AG04449 (cell line): ENCODE measurements at regions of chr1 and their contacts with region 1.

Region 1: DNA sequence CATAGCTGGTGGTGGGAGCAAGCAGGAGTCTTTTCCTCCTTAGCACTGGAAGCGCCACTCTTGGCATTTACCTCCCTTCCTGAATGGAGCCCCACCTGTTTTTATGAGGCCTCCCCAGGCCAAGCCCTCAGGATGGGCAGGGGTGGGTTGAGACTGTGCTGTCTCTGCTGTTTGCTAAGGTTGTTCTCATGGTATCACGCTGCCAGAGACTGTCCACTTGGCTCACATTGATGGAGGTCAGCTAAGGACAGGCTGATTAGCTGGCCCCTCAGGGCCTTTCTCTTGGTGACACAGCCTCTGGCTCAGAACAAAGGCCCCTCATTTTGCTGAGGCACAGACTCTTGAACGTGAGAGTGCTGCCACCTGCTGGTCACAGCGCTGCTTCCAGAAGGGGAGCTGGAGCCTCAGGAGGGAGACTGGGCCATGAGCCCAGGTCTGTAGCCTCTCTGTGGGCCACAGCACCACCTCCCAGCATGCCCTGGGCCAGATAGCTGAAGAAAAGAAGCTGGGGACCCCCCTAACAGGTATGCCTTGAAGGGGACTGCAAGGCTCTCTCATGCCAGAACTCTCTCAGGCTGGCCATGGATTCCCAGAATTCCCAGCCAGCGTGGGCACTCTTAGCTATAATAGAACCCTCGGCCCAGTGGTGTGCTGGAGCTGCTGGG is 85.6 kb downstream of the CD58 start:
- DNase-seq: no peak
- H3K4me3 ChIP-seq: no peak overlapping the region
- CTCF ChIP-seq: peak; percentile 92

Region 2: GRCh38 chr1:115949156-115949555 is 536.0 kb before region 1 on chr1:
- CTCF ChIA-PET with region 1: no interaction called
- POLR2A ChIA-PET with region 1: no interaction called
- DNase-seq: no peak
- H3K4me3 ChIP-seq: no peak overlapping the region
- CTCF ChIP-seq: no peak

Region 3: GRCh38 chr1:116133696-116134650 is 351.2 kb before region 1 on chr1:
- CTCF ChIA-PET with region 1: interaction called, 1,029 read pairs
- POLR2A ChIA-PET with region 1: no interaction called
- DNase-seq: no peak
- H3K4me3 ChIP-seq: no peak overlapping the region
- CTCF ChIP-seq: peak; percentile 22

Region 4: GRCh38 chr1:116168277-116169097 is 316.7 kb before region 1 on chr1:
- CTCF ChIA-PET with region 1: interaction called, 11 read pairs
- POLR2A ChIA-PET with region 1: no interaction called
- DNase-seq: no peak
- H3K4me3 ChIP-seq: peak overlapping the region; percentile 55
- CTCF ChIP-seq: peak; percentile 82

Region 5: DNA sequence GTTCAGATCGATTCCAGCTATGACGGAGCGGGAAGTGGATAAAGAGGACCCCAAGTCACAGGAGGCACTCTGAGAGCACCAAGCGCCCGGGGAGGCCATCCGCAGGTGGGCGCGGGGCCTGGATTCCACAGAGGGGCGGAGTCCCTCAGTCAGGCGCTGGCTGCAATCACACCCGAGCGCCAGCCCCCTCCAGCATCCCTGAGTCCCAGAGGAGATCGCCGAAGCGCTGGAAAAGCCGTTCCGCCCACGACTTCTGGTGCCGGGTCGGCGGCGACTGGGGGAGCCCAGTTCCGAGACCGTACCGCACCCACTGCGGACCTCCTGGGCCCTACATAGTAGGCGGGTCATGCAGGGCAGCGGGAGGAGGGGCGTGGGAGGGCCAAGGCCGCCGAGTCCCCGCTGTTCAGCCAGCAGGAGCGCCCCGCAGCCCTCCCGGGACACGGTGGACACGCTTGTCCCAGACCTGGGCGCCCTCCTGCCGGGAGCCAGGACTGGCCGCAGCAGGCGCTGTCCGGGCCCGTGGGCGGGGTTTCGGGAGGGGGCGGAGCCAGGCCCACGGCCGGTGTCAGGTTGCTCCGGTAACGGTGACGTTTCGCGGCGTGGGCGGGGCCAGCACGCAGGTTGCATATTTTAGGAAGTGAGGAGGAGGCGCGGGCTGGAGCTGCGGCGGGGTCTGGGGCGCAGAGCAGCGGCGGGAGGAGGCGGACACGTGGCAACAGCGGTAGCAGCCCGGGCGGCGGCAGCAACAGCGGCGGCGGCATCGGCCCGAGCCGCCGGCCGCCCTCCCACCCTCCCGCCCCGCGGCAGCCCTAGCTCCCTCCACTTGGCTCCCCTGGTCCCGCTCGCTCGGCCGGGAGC is 112.4 kb before region 1 on chr1 and contains the start of gene ATP1A1:
- CTCF ChIA-PET with region 1: interaction called, 44 read pairs
- POLR2A ChIA-PET with region 1: interaction called, 3 read pairs
- DNase-seq: peak; percentile 31
- H3K4me3 ChIP-seq: peak within 1 kb of the TSS; percentile 76
- CTCF ChIP-seq: peak; percentile 31

Region 6: GRCh38 chr1:116457946-116458604 is 27.1 kb before region 1 on chr1:
- CTCF ChIA-PET with region 1: interaction called, 11 read pairs
- POLR2A ChIA-PET with region 1: no interaction called
- DNase-seq: no peak
- H3K4me3 ChIP-seq: no peak overlapping the region
- CTCF ChIP-seq: no peak

Region 7: DNA sequence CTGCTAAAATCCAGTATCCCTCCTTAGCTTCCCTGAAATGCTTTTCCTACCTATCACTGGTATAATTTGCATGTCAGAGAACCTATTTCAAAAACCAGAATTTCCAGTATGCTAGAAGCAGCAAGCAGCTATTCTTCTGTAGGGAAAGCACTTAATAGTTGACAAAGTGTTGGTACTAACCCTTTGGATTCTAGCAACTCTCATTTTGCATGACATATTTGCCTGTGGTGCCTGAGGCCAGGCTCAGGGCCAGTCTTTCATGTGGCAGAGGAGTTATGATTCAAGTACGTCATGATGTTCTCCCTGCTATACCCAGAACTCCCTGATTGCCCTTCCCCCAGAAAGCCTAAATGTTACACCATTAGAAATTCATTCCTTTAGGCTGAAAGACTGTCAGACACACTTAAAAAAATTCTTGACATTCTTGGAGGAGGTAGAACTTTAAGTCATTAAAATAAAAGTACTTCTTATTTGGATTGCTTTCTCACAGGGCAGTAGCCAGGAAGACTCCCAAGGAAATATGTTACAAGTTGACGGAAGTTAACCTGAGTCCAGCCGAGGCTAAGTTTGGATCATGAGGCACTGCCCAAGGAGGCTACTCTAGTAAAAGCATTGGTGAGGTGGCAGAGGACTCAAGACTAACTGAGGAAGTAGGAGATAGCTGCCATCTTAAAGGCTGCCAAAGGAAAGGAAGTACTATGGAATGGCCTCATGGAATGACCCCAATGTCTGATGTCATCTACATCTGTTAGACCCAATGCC is 1998.2 kb after region 1 on chr1:
- CTCF ChIA-PET with region 1: no interaction called
- POLR2A ChIA-PET with region 1: no interaction called
- DNase-seq: no peak
- H3K4me3 ChIP-seq: no peak overlapping the region
- CTCF ChIP-seq: no peak